Naive thymus-derived CD4-positive, alpha-beta T cell (primary cell): ENCODE measurements at regions of chr3 and their contacts with region 1.

Region 1: DNA sequence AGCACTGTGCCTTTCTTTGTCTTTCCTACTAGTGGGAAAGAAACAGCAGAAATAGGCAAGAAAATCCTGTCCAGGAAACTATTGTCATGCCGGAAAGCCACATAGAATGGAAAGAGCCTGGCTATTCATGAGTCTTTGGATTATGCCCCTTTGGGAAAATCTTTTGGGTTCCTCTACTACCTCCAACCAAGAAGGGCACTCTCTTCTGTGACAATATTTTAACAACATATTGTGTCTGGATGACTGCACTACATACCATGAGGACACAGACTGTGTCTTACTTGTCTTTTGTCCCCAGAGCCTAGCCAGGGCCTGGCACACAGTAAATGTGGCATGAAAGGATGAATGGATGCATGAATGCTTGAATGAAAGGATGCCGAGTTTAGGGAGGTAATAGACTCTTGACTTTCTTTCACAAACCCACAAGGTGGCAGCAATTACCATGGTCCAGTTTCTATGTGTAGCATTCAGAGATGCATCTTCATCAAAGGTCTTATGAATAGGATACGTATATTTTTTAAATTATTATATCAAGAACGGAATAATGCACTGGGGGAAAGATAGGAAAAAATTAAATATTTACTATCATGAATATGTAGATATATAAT is 30.3 kb downstream of the ARL14 start:
- DNase-seq: peak in 7 of 9 donors; percentile 18 to 62 (median 47)
- ATAC-seq: peak; percentile 71
- H3K4me3 ChIP-seq: no peak overlapping the region
- H3K4me3 Mint-ChIP-seq: no peak overlapping the region
- H3K27ac ChIP-seq: no peak overlapping the region
- H3K27ac Mint-ChIP-seq: no peak overlapping the region
- H3K4me1 ChIP-seq: no peaks in the 10 kb centered on the region
- H3K4me1 Mint-ChIP-seq: no peaks in the 10 kb centered on the region
- H3K27me3 ChIP-seq: peaks cover 0 to 5% of the 10 kb centered on the region in 2 donors
- H3K27me3 Mint-ChIP-seq: peaks cover 28 to 43% (median 36%) of the 10 kb centered on the region in 5 donors

Region 2: DNA sequence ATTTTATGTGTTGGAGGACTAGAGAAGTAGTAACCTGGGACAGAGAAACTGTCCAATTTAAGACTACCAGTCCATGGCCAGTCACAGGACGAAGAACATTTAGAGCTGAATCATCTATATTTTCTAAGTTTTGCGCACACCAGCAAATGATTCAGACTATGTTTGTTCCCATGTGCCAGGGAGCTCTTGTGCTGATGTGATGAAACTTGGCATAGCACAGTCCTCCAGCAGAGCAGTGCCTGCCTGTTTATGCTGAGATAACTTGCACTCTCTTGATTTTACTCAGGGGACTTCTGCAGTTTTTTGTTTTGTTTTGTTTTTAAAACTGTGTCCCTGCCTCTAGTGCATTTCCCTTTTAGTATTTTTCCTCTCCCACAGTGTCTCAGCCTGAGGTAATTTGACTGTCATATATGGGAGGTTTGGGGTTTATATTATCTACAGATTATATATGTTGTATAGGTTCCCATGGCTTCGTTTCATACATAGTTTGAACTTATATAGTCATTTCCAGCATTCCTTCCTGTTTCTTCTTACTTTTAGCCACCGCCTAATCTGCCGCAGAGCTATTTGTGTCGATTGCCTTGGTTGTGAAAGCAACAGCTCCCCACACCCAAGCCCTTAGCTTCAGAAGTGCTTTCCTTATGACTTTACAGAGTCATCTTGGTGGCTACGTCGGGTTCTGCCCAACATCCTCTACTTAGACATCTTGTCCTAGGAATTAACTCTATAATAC is 94.3 kb after region 1 on chr3:
- CTCF ChIA-PET with region 1: no interaction called
- POLR2A ChIA-PET with region 1: no interaction called
- intact Hi-C with region 1: loop called in 1 of 2 experiments (anchors 1 kb)
- DNase-seq: peak in 7 of 9 donors; percentile 1 to 59 (median 10)
- ATAC-seq: peak; percentile 87
- H3K4me3 ChIP-seq: no peak overlapping the region
- H3K4me3 Mint-ChIP-seq: peak overlapping the region in 8 of 10 donors; percentile 7 to 67 (median 54)
- H3K27ac ChIP-seq: no peak overlapping the region
- H3K27ac Mint-ChIP-seq: peak overlapping the region in 4 of 9 donors; percentile 10 to 92 (median 72)
- H3K4me1 ChIP-seq: peaks cover 0 to 5% of the 10 kb centered on the region in 2 donors
- H3K4me1 Mint-ChIP-seq: peaks cover 0 to 26% (median 10%) of the 10 kb centered on the region in 7 donors
- H3K27me3 ChIP-seq: no peaks in the 10 kb centered on the region
- H3K27me3 Mint-ChIP-seq: peaks cover 0 to 11% (median 7%) of the 10 kb centered on the region in 5 donors